ENCODE measurements at regions of chr12 and their contacts with region 1.

Region 1: GRCh38 chr12:66301944-66302826 is at the start of gene HELB:
- DNase-seq: peak; percentile 85 to 97 (median 96)
- H3K4me3 ChIP-seq: peak within 1 kb of the TSS; percentile 96
- H3K4me3 Mint-ChIP-seq: peak within 1 kb of the TSS; percentile 93 to 100 (median 97)
- H3K27ac ChIP-seq: peak within 1 kb of the TSS; percentile 82
- H3K27ac Mint-ChIP-seq: peak within 1 kb of the TSS; percentile 89 to 99 (median 98)
- H3K4me1 ChIP-seq: peaks cover 36% of the 10 kb centered on the region
- H3K4me1 Mint-ChIP-seq: peaks cover 40 to 55% (median 50%) of the 10 kb centered on the region in 3 donors
- H3K27me3 ChIP-seq: no peaks in the 10 kb centered on the region
- H3K27me3 Mint-ChIP-seq: peaks cover 0 to 2% of the 10 kb centered on the region in 2 donors
- total RNA-seq, gene HELB: 13.8 to 14.2 TPM

Region 2: GRCh38 chr12:66169221-66170170 is 132.7 kb before region 1 on chr12 and contains the start of gene TMBIM4:
- CTCF ChIA-PET with region 1: no interaction called
- POLR2A ChIA-PET with region 1: interaction called, 11 read pairs
- DNase-seq: peak; percentile 80 to 92 (median 86)
- H3K4me3 ChIP-seq: peak within 1 kb of the TSS; percentile 97
- H3K4me3 Mint-ChIP-seq: peak within 1 kb of the TSS; percentile 93 to 98 (median 97)
- H3K27ac ChIP-seq: peak within 1 kb of the TSS; percentile 98
- H3K27ac Mint-ChIP-seq: peak within 1 kb of the TSS; percentile 93 to 100 (median 98)
- H3K4me1 ChIP-seq: peaks cover 21% of the 10 kb centered on the region
- H3K4me1 Mint-ChIP-seq: peaks cover 44 to 58% (median 57%) of the 10 kb centered on the region in 3 donors
- H3K27me3 ChIP-seq: no peaks in the 10 kb centered on the region
- H3K27me3 Mint-ChIP-seq: peaks cover 0 to 5% of the 10 kb centered on the region in 2 donors
- total RNA-seq, gene TMBIM4: 59.8 to 60.0 TPM

Region 3: GRCh38 chr12:66288121-66288520 is 14.1 kb before region 1 on chr12:
- CTCF ChIA-PET with region 1: interaction called, 7 read pairs
- POLR2A ChIA-PET with region 1: interaction called, 26 read pairs
- DNase-seq: peak; percentile 9 to 88 (median 77)
- H3K4me3 ChIP-seq: no peak overlapping the region
- H3K4me3 Mint-ChIP-seq: peak overlapping the region; percentile 46 to 82 (median 70)
- H3K27ac ChIP-seq: no peak overlapping the region
- H3K27ac Mint-ChIP-seq: peak overlapping the region; percentile 65 to 93 (median 80)
- H3K4me1 ChIP-seq: peaks cover 90% of the 10 kb centered on the region
- H3K4me1 Mint-ChIP-seq: peaks cover 65 to 93% (median 93%) of the 10 kb centered on the region in 3 donors
- H3K27me3 ChIP-seq: no peaks in the 10 kb centered on the region
- H3K27me3 Mint-ChIP-seq: peaks cover 0 to 2% of the 10 kb centered on the region in 2 donors

Region 4: DNA sequence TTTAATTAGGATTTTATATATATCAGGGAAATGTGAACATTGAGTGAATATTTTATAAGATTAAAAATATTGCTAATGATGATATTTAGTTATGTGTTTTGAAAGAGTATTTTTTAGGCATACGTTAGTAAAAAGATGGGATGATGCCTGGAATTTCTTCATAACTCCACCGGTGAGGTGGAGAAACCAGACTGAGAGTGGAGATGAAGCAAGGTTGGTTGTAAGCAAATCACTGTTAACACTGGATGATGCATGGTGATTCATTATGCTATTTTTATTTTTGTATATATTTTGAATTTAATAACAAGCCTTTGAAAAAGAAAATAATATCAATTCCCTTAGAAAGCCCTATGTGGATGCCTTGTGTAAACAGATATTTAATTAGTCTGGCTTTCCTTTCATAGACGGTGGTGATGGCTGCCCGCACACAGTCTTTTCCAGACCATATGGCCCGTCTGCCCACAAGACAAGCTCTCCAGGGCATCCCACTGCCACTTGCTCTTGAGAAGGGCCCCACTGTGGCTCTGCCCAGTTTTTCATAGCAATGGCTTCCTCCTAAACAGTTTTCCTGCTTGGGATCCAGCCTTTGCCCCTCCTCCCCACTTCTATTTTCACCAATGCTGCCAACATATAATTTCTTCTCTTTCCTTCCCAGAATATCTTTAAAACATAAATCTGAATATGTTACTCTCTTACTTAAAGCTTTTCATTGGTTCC is 95.5 kb after region 1 on chr12:
- CTCF ChIA-PET with region 1: no interaction called
- POLR2A ChIA-PET with region 1: interaction called, 11 read pairs
- DNase-seq: no peak
- H3K4me3 ChIP-seq: no peak overlapping the region
- H3K4me3 Mint-ChIP-seq: no peak overlapping the region
- H3K27ac ChIP-seq: no peak overlapping the region
- H3K27ac Mint-ChIP-seq: no peak overlapping the region
- H3K4me1 ChIP-seq: peaks cover 14% of the 10 kb centered on the region
- H3K4me1 Mint-ChIP-seq: peaks cover 10 to 18% (median 16%) of the 10 kb centered on the region in 3 donors
- H3K27me3 ChIP-seq: no peaks in the 10 kb centered on the region
- H3K27me3 Mint-ChIP-seq: peaks cover 17 to 23% of the 10 kb centered on the region in 2 donors